Activated CD4-positive, alpha-beta memory T cell treated with anti-CD3 and anti-CD28 coated beads for 36 hours (primary cell): ENCODE measurements at regions of chr2 and their contacts with region 1.

Region 1: DNA sequence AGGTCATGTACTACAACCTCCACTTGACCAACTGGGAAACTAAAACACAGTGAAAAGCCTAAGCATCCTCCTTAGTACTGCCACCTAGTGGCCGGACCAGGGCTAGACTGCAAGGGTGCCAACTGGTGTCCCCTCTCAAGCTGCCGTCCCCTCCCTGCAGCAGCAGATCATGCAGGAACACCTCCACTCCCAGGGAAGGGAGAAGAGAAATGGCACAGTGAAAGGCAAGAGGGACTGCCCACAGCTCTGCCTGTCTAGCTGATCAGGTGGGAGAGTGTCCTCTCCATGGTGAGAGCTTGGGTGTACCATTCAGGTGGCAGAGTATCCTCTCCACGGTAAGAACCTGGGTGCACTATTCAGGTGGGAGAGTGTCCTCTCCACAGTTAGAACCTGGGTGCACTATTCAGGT is 78.1 kb downstream of the AAK1 start:
- DNase-seq: peak; percentile 81
- H3K4me3 Mint-ChIP-seq: no peak overlapping the region
- H3K27ac Mint-ChIP-seq: no peak overlapping the region
- H3K4me1 Mint-ChIP-seq: peaks cover 88% of the 10 kb centered on the region
- H3K27me3 Mint-ChIP-seq: no peaks in the 10 kb centered on the region

Region 2: GRCh38 chr2:69436938-69437750 is 128.3 kb before region 1 on chr2 and contains the start of gene NFU1:
- CTCF ChIA-PET with region 1: interaction called, 28 read pairs
- POLR2A ChIA-PET with region 1: interaction called, 5 read pairs
- intact Hi-C with region 1: no loop called
- DNase-seq: peak; percentile 94
- H3K4me3 Mint-ChIP-seq: peak within 1 kb of the TSS; percentile 95
- H3K27ac Mint-ChIP-seq: peak within 1 kb of the TSS; percentile 91
- H3K4me1 Mint-ChIP-seq: peaks cover 24% of the 10 kb centered on the region
- H3K27me3 Mint-ChIP-seq: no peaks in the 10 kb centered on the region
- total RNA-seq, gene NFU1: 37.8 to 44.5 TPM

Region 3: GRCh38 chr2:69581774-69582581 is 16.5 kb after region 1 on chr2:
- CTCF ChIA-PET with region 1: interaction called, 175 read pairs
- POLR2A ChIA-PET with region 1: interaction called, 4 read pairs
- intact Hi-C with region 1: loop called (anchors 2 kb)
- DNase-seq: no peak
- H3K4me3 Mint-ChIP-seq: no peak overlapping the region
- H3K27ac Mint-ChIP-seq: peak overlapping the region; percentile 38
- H3K4me1 Mint-ChIP-seq: peaks cover 90% of the 10 kb centered on the region
- H3K27me3 Mint-ChIP-seq: no peaks in the 10 kb centered on the region

Region 4: GRCh38 chr2:69616756-69617155 is 51.3 kb after region 1 on chr2:
- CTCF ChIA-PET with region 1: interaction called, 39 read pairs
- POLR2A ChIA-PET with region 1: no interaction called
- intact Hi-C with region 1: no loop called
- DNase-seq: peak; percentile 67
- H3K4me3 Mint-ChIP-seq: peak overlapping the region; percentile 7
- H3K27ac Mint-ChIP-seq: peak overlapping the region; percentile 38
- H3K4me1 Mint-ChIP-seq: peaks cover 40% of the 10 kb centered on the region
- H3K27me3 Mint-ChIP-seq: no peaks in the 10 kb centered on the region

Region 5: GRCh38 chr2:69643602-69644505 is 78.4 kb after region 1 on chr2 and contains the start of gene AAK1:
- CTCF ChIA-PET with region 1: interaction called, 31 read pairs
- POLR2A ChIA-PET with region 1: interaction called, 6 read pairs
- intact Hi-C with region 1: loop called (anchors 2 kb)
- DNase-seq: peak; percentile 91
- H3K4me3 Mint-ChIP-seq: peak within 1 kb of the TSS; percentile 86
- H3K27ac Mint-ChIP-seq: peak within 1 kb of the TSS; percentile 99
- H3K4me1 Mint-ChIP-seq: peaks cover 52% of the 10 kb centered on the region
- H3K27me3 Mint-ChIP-seq: no peaks in the 10 kb centered on the region
- total RNA-seq, gene AAK1: 95.2 to 99.3 TPM

Region 6: DNA sequence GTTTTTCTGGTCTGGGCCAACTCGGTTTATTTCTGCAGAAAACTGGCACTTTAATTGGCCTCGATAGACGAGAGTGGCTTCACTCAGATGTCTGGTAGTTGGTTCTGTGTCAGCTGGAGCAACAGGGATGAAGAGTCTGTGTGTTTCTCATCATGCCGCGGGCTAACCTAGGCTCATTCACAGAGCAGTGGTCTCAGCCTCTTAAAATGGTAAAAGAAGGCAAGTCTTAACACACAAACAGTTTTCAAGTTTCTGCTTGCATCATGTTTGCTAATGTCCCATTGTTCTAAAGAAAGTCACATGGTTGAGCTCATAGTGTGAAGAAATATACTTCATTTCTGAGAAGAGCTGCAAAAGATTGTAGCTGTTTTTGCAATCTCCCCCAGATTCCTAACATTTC is 139.0 kb after region 1 on chr2:
- CTCF ChIA-PET with region 1: interaction called, 13 read pairs
- POLR2A ChIA-PET with region 1: no interaction called
- intact Hi-C with region 1: no loop called
- DNase-seq: no peak
- H3K4me3 Mint-ChIP-seq: no peak overlapping the region
- H3K27ac Mint-ChIP-seq: no peak overlapping the region
- H3K4me1 Mint-ChIP-seq: peaks cover 3% of the 10 kb centered on the region
- H3K27me3 Mint-ChIP-seq: no peaks in the 10 kb centered on the region

Region 7: GRCh38 chr2:69816923-69817542 is 251.6 kb after region 1 on chr2:
- CTCF ChIA-PET with region 1: interaction called, 18 read pairs
- POLR2A ChIA-PET with region 1: no interaction called
- intact Hi-C with region 1: no loop called
- DNase-seq: peak; percentile 81
- H3K4me3 Mint-ChIP-seq: no peak overlapping the region
- H3K27ac Mint-ChIP-seq: no peak overlapping the region
- H3K4me1 Mint-ChIP-seq: peaks cover 4% of the 10 kb centered on the region
- H3K27me3 Mint-ChIP-seq: no peaks in the 10 kb centered on the region